ENCODE measurements at regions of chr13 and their contacts with region 1.

Region 1: DNA sequence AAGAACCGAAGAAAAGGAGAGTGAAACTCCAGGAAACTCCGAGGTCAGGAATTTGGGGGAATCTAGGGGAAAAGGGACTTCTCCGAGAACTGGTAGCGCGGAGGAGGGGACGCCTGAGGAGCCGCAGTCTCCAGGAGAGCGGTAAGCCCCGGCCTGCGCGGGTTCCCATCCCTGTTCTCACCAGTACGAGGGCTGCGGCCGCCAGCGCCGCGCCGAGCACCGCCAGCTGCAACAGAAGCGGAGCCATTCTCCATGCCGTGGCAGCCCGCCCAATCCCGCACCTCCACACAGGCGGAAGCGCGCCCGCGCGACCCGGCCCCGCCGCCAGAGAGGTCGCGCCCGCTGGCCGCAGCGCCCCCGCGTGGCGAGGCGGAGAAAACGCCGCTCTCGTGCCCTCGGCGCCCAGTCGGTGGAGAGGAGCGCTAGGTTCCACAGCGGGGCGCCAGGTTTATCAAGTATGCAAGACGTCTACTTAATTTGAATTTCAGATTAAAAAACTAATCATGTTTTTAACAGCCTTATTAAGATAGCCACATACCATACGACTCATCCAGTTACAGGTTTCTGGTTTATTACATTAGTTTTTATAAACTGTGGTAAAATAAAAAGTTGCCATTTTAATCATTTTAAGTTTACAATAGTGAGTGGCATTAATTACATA is at the start of gene ALG5:
- DNase-seq: peak; percentile 84
- ATAC-seq: peak; percentile 67
- H3K4me3 ChIP-seq: peak within 1 kb of the TSS; percentile 96
- H3K27ac ChIP-seq: peak within 1 kb of the TSS; percentile 92
- H3K4me1 ChIP-seq: peaks cover 12% of the 10 kb centered on the region
- H3K27me3 ChIP-seq: no peaks in the 10 kb centered on the region
- CTCF ChIP-seq: peak; percentile 85
- total RNA-seq, gene ALG5: 17.9 and 19.7 TPM in 2 replicates

Region 2: DNA sequence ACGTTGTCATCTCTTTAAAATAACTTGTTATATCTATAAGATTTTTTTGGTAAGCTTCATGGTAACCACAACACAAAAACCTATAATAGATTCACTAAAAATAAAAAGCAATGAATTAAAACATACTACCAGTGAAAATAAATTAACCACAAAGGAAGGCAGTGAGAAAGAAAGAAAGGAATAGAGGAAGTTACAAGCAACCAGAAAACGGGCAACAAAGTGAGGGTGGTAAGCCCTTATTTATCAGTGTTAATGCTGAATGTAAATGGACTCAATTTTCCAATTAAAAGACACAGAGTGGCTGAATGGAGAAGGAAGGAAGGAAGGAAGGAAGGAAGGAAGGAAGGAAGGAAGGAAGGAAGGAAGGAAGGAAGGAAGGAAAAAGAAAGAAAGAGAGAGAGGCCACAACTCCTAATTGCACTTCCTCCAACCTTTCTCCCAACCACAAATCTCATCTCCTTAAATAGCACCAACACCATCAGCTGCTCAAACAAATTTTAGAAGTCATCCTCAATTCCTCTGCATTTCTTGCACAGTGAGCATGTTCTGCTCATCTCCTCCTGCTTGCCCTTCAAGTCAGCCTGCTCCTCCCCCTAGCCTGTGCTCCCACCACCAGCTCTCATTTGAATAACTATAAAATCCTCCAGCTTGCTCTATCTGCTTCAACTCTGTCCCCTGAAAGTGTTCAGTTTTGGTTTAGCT is 518.3 kb before region 1 on chr13:
- CTCF ChIA-PET with region 1: no interaction called
- POLR2A ChIA-PET with region 1: no interaction called
- intact Hi-C with region 1: no loop called
- DNase-seq: no peak
- ATAC-seq: no peak
- H3K4me3 ChIP-seq: no peak overlapping the region
- H3K27ac ChIP-seq: no peak overlapping the region
- H3K4me1 ChIP-seq: no peaks in the 10 kb centered on the region
- H3K27me3 ChIP-seq: peaks cover 16% of the 10 kb centered on the region
- CTCF ChIP-seq: no peak

Region 3: DNA sequence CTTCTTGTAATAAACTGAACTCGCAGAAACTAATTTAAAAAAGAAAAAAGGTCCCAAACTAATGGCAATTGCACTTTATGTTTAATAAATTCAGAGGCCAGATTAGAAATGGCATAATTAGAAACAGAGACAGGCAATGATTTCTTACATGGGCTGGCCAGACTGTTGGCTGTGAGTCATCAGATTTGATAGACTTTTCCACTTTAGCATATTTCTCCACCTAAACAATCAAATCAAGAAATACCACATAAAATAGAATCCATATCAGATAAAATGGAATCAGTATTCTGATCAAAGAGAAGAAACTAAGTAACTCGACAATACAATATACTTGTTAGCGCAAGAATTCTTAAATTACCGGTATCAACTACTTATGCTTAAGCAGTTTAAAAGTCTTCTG is 30.4 kb after region 1 on chr13:
- CTCF ChIA-PET with region 1: no interaction called
- POLR2A ChIA-PET with region 1: interaction called, 18 read pairs
- intact Hi-C with region 1: no loop called
- DNase-seq: no peak
- ATAC-seq: peak; percentile 50
- H3K4me3 ChIP-seq: no peak overlapping the region
- H3K27ac ChIP-seq: no peak overlapping the region
- H3K4me1 ChIP-seq: peaks cover 6% of the 10 kb centered on the region; the same call in 1 of the 2 replicates
- H3K27me3 ChIP-seq: no peaks in the 10 kb centered on the region
- CTCF ChIP-seq: no peak

Region 4: GRCh38 chr13:37058910-37059847 is 60.0 kb after region 1 on chr13 and contains the start of gene SUPT20H:
- CTCF ChIA-PET with region 1: no interaction called
- POLR2A ChIA-PET with region 1: no interaction called
- intact Hi-C with region 1: loop called (anchors 2 kb)
- DNase-seq: peak; percentile 83
- ATAC-seq: peak; percentile 95
- H3K4me3 ChIP-seq: peak within 1 kb of the TSS; percentile 83
- H3K27ac ChIP-seq: peak within 1 kb of the TSS; percentile 36; the same call in 1 of the 2 replicates
- H3K4me1 ChIP-seq: peaks cover 5% of the 10 kb centered on the region
- H3K27me3 ChIP-seq: no peaks in the 10 kb centered on the region
- CTCF ChIP-seq: no peak
- total RNA-seq, gene SUPT20H: 16.8 and 18.1 TPM in 2 replicates

Region 5: GRCh38 chr13:37068962-37069361 is 69.8 kb after region 1 on chr13:
- CTCF ChIA-PET with region 1: no interaction called
- POLR2A ChIA-PET with region 1: no interaction called
- intact Hi-C with region 1: loop called (anchors 1 kb)
- DNase-seq: peak; percentile 25
- ATAC-seq: peak; percentile 60
- H3K4me3 ChIP-seq: no peak overlapping the region
- H3K27ac ChIP-seq: no peak overlapping the region
- H3K4me1 ChIP-seq: 0 out of 2 replicates have a peak, but pooled peaks cover 4% of the 10 kb centered on the region
- H3K27me3 ChIP-seq: no peaks in the 10 kb centered on the region
- CTCF ChIP-seq: peak; percentile 46; the same call in 1 of the 2 replicates

Region 6: GRCh38 chr13:37100731-37101130 is 101.5 kb after region 1 on chr13:
- CTCF ChIA-PET with region 1: no interaction called
- POLR2A ChIA-PET with region 1: no interaction called
- intact Hi-C with region 1: no loop called
- DNase-seq: no peak
- ATAC-seq: no peak
- H3K4me3 ChIP-seq: no peak overlapping the region
- H3K27ac ChIP-seq: no peak overlapping the region
- H3K4me1 ChIP-seq: no peaks in the 10 kb centered on the region
- H3K27me3 ChIP-seq: peaks cover 41% of the 10 kb centered on the region
- CTCF ChIP-seq: no peak

Measured in PC-3 (cell line).